GM12878 (cell line): ENCODE measurements at regions of chr11 and their contacts with region 1.

Region 1: GRCh38 chr11:8533332-8533731 is 60.7 kb downstream of the STK33 start:
- DNase-seq: peak; percentile 86
- ATAC-seq: peak; percentile 94
- H3K4me3 ChIP-seq: peak overlapping the region; percentile 2; the same call in 1 of the 2 replicates
- H3K27ac ChIP-seq: peak overlapping the region; percentile 89
- H3K4me1 ChIP-seq: peaks cover 20% of the 10 kb centered on the region
- H3K27me3 ChIP-seq: no peaks in the 10 kb centered on the region
- CTCF ChIP-seq: peak; percentile 33 to 49 (median 47); a peak in 5 of 6 replicates
- EP300 ChIP-seq: no peak
- POLR2A ChIP-seq: no peak
- RAD21 ChIP-seq: peak; percentile 54

Region 2: DNA sequence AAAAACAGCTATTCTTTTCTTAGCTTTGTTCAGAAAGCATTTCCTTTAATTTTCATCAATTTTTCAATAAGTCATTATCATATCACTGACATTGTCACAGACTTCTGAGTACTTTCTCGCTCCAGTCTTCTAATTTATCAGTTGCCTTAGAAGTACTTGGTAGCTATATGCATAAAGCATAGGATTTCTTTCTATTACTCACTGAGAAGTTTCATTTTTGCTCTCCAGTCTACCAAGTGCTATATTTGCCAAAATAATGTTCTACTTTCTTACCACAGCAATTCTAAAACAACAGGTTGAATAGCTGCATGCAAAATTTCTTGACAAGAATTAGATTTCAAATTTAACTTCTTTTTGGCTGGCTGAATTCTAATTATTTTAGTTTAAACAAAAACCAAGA is 55.7 kb before region 1 on chr11:
- CTCF ChIA-PET with region 1: interaction called, 3 read pairs
- POLR2A ChIA-PET with region 1: interaction called, 3 read pairs
- RAD21 ChIA-PET with region 1: interaction called, 5 read pairs
- SMC1A ChIA-PET with region 1: interaction called, 4 read pairs
- in situ Hi-C with region 1: no loop called
- intact Hi-C with region 1: loop called (anchors 5 kb)
- DNase-seq: peak; percentile 36
- ATAC-seq: peak; percentile 99
- H3K4me3 ChIP-seq: no peak overlapping the region
- H3K27ac ChIP-seq: no peak overlapping the region
- H3K4me1 ChIP-seq: peaks cover 5% of the 10 kb centered on the region; the same call in 1 of the 2 replicates
- H3K27me3 ChIP-seq: no peaks in the 10 kb centered on the region
- CTCF ChIP-seq: no peak
- EP300 ChIP-seq: 0 out of 4 replicates have a peak, but pooled peaks of 1 of the 2 experiments have one; percentile 27
- POLR2A ChIP-seq: no peak
- RAD21 ChIP-seq: no peak

Region 3: DNA sequence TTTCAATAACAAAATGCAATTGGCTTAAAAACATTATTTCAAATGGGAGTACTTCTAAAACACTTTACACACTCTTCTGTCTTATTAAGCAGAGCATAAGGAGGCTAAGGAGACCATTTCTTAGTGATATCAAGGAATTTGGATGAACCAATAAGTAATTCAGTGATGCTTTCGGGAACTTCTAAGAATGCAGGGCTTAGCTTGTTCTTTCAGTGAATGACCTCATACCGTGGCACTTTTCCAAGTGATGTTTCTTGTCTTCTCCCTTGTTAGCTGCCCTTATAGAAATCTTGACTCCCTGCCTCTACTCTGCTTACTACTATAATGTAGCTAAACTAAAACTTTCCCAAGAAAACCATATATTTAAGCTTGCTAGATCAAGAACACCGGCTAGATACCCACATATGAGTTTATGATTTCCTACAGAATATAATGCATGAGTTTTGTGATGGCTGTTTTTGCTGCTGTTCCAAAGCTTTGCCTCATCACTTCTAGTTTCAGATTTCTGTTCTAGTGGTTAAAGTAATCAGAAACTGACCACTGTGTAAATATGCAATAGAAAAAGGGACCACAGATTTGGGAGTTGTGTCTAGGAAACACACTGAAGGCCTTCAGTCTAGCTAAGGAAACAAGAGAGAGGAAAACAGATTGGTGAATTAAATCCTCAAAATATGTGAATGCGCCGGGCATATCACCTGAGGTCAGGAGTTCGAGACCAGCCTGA is 98.2 kb after region 1 on chr11:
- CTCF ChIA-PET with region 1: no interaction called
- POLR2A ChIA-PET with region 1: no interaction called
- RAD21 ChIA-PET with region 1: no interaction called
- SMC1A ChIA-PET with region 1: no interaction called
- in situ Hi-C with region 1: no loop called
- intact Hi-C with region 1: no loop called
- DNase-seq: no peak
- ATAC-seq: no peak
- H3K4me3 ChIP-seq: no peak overlapping the region
- H3K27ac ChIP-seq: no peak overlapping the region
- H3K4me1 ChIP-seq: no peaks in the 10 kb centered on the region
- H3K27me3 ChIP-seq: no peaks in the 10 kb centered on the region
- CTCF ChIP-seq: no peak
- EP300 ChIP-seq: no peak
- POLR2A ChIP-seq: no peak
- RAD21 ChIP-seq: no peak